ENCODE measurements at regions of chr22 and their contacts with region 1.

Region 1: DNA sequence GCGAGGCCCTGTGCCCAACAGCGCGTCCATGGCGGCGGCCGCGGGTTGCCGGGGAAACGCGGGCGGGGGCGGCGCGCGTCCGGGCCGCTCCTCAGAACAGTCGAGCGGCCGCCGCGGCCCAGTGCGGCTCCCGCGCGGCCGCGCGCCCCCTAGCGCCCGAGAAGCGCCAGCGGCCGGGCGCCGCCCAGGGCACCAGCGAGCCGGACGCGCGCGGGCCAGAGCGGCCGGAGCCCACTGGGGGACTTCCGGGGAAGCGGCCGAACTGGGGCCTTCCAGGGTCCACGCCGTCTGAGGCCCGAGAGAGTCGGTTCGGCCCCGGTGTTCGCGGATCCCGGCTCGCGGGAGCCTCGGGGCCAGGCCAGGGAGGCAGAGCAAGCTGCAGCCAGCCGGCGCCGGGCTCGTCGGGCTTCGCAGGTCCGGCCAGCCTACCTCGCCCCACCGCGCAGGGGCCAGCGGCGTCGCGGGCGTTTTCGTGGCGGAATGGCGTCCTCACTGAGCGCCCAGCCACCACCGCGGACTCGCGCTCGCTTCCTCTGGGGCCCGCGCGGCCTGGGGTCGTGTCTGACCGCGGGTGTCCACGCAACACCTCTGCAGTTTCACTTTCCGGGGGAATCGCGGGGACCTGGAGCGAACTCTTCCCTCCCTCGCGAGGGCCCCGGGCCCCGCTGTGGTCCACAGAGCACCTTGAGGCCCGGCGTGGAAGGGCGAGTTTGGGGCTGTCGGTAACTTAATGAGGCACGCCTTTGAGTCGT is at the start of gene DENND6B:
- DNase-seq: no peak
- H3K4me3 ChIP-seq: peak within 1 kb of the TSS; percentile 66
- CTCF ChIP-seq: peak; percentile 15

Region 2: GRCh38 chr22:50244420-50245213 is 82.5 kb before region 1 on chr22 and contains the start of gene TUBGCP6:
- CTCF ChIA-PET with region 1: interaction called, 81 read pairs
- POLR2A ChIA-PET with region 1: interaction called, 3 read pairs
- DNase-seq: peak; percentile 24
- H3K4me3 ChIP-seq: peak within 1 kb of the TSS; percentile 98
- CTCF ChIP-seq: peak; percentile 19

Region 3: DNA sequence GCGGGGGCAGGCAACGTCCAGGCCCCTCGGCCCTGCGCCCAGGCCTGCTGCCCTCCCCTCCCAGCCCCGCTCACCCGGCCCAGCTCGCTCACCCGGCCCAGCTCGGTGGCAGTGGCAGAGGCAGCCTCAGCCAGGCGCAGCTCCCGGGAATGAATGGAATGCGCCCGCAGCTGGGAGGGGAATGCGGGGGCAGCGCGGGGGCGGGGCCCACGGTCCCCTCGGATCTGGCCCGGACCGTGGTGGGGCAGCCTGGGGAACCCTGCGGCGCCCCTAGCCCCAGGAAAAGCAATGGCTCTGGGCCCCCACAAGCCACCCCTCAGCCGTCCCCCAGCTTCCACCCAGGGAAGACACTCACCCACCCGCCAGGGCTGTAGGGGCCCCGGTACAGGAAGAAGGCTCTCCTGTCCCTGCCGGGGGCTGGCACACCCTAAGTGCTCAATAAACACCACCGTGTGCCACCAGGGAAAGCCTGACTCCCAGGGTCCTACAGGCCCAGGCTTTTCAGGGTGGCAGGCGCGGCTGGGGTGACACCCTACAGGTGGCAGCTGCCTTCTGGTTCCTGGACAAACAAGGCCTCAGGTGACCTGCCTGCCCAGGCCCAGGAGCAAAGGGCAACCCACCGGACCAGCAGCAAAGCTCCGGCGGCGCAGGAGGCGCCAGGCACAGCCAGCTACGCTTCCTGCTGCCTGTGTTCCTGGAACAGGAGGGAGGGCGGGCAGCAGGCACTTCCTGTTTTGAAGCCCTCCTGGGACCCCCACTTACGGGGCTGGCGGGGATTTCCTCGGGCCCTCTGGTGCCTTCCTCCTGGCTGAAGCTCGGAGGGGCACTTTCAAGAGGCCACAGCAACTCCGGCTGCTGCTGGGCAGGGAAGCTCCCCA is 33.5 kb before region 1 on chr22:
- CTCF ChIA-PET with region 1: interaction called, 11 read pairs
- POLR2A ChIA-PET with region 1: no interaction called
- DNase-seq: no peak
- H3K4me3 ChIP-seq: peak overlapping the region; percentile 50
- CTCF ChIP-seq: no peak

Region 4: GRCh38 chr22:50306753-50307749 is 20.1 kb before region 1 on chr22 and contains the start of gene PLXNB2:
- CTCF ChIA-PET with region 1: interaction called, 13 read pairs
- POLR2A ChIA-PET with region 1: interaction called, 5 read pairs
- DNase-seq: no peak
- H3K4me3 ChIP-seq: peak within 1 kb of the TSS; percentile 89
- CTCF ChIP-seq: no peak